GM12878 (cell line): ENCODE measurements at regions of chr12 and their contacts with region 1.

Region 1: GRCh38 chr12:63103494-63104131 is 47.4 kb downstream of the AVPR1A start:
- DNase-seq: no peak
- ATAC-seq: peak; percentile 35; the same call in 2 of the 3 replicates
- H3K4me3 ChIP-seq: no peak overlapping the region
- H3K27ac ChIP-seq: no peak overlapping the region
- H3K4me1 ChIP-seq: no peaks in the 10 kb centered on the region
- H3K27me3 ChIP-seq: no peaks in the 10 kb centered on the region
- CTCF ChIP-seq: peak; percentile 63 to 75 (median 70)
- EP300 ChIP-seq: no peak
- POLR2A ChIP-seq: no peak
- RAD21 ChIP-seq: peak; percentile 70

Region 2: DNA sequence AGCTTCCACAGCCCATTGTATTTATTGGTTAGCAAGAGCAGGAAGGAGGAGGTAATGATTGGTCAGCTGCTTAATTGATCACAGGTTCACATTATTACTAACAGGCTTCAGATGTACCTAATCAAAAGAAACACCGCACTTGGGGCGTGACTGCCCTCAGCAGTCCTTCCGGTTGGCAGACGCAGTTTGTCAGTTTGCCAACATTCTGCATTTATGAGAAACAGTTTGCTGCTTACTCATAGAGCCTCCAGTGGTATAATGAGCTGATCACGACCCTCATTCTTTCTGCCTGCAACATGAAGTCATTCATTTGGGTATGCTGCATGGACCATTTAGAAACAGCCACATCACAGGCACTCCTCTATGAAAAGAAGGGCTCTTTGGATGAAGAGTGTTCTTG is 126.2 kb before region 1 on chr12:
- CTCF ChIA-PET with region 1: no interaction called
- POLR2A ChIA-PET with region 1: no interaction called
- RAD21 ChIA-PET with region 1: no interaction called
- SMC1A ChIA-PET with region 1: no interaction called
- in situ Hi-C with region 1: no loop called
- intact Hi-C with region 1: no loop called
- DNase-seq: no peak
- ATAC-seq: no peak
- H3K4me3 ChIP-seq: no peak overlapping the region
- H3K27ac ChIP-seq: no peak overlapping the region
- H3K4me1 ChIP-seq: no peaks in the 10 kb centered on the region
- H3K27me3 ChIP-seq: no peaks in the 10 kb centered on the region
- CTCF ChIP-seq: no peak
- EP300 ChIP-seq: no peak
- POLR2A ChIP-seq: no peak
- RAD21 ChIP-seq: no peak

Region 3: DNA sequence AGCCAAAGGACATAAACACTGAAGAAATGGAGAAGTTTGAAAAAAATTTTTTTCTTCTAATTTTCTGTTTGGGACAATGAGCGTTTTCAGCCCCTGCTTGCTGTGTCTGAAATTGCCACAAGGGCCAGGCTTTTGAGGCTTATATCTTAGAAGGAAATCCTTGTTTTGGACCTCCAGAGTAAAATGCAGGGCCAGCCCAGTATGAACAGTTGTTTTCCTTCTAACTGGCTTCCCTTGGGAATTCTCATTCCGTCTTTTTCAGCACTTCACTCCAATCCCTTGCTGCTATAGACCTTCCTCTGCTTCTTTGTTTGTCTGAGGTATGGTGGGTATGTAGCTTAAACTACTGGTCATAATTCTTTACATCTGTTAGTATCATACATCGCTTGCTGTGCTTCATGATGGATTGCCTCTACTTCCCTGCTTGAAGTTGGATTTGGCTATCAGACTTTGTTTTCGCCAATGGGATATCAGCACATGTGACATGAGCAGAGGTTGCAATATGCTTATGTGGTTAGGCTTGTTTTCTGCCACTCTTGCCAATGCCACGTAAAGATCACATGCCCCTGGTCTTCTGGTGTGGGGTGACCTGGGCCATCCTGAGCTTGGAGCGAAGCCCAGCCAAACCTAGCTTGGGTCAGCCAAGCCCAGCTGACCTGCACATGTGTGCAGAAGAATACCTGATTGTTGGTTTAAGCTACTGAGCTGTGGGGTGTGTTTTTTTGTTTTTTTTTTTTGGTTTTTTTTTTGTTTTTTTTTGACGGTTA is 17.3 kb before region 1 on chr12:
- CTCF ChIA-PET with region 1: no interaction called
- POLR2A ChIA-PET with region 1: no interaction called
- RAD21 ChIA-PET with region 1: no interaction called
- SMC1A ChIA-PET with region 1: no interaction called
- in situ Hi-C with region 1: no loop called
- intact Hi-C with region 1: no loop called
- DNase-seq: no peak
- ATAC-seq: no peak
- H3K4me3 ChIP-seq: no peak overlapping the region
- H3K27ac ChIP-seq: no peak overlapping the region
- H3K4me1 ChIP-seq: no peaks in the 10 kb centered on the region
- H3K27me3 ChIP-seq: no peaks in the 10 kb centered on the region
- CTCF ChIP-seq: no peak
- EP300 ChIP-seq: no peak
- POLR2A ChIP-seq: no peak
- RAD21 ChIP-seq: no peak

Region 4: DNA sequence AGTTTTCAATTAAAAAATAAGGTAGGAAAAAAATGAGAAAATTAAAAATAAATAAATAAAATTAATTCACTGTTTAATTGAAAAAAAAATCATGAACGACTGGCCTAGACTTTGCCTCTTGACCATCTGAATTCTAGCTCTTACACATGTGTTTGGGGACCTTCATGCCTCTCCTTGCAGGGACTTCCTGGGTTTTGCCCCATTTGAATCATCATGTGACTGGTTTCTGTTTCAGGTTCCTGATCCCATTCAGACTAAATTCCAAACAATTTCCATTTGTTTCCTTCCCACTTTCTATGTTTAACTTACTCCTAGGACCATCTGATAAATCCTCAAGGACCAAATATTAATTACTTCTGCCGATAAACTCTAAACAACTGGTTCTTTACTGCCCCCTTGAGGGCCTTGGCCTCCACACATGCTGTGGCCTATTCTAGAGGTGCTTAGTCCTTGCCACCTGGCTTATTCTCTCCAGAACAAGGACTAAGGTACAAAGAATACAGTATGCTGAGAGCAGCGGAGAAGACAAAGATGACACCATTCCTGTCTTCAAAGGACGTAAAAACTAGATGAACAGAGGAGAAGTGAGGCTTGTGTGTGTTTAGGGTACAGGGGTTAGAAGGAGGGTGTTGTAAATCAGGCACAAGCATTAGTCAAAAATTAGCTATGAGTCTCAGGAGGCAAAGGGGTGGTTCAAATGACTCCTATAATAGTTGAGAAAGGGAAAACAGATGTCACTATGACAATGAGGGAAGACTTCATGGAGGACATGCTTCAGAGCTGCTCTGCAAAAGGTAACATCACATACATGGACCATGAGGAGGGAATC is 173.1 kb after region 1 on chr12:
- CTCF ChIA-PET with region 1: no interaction called
- POLR2A ChIA-PET with region 1: no interaction called
- RAD21 ChIA-PET with region 1: no interaction called
- SMC1A ChIA-PET with region 1: no interaction called
- in situ Hi-C with region 1: no loop called
- intact Hi-C with region 1: loop called (anchors 1 kb)
- DNase-seq: no peak
- ATAC-seq: peak; percentile 88
- H3K4me3 ChIP-seq: no peak overlapping the region
- H3K27ac ChIP-seq: no peak overlapping the region
- H3K4me1 ChIP-seq: no peaks in the 10 kb centered on the region
- H3K27me3 ChIP-seq: no peaks in the 10 kb centered on the region
- CTCF ChIP-seq: peak; percentile 22 to 61 (median 56)
- EP300 ChIP-seq: no peak
- POLR2A ChIP-seq: no peak
- RAD21 ChIP-seq: peak; percentile 40

Region 5: DNA sequence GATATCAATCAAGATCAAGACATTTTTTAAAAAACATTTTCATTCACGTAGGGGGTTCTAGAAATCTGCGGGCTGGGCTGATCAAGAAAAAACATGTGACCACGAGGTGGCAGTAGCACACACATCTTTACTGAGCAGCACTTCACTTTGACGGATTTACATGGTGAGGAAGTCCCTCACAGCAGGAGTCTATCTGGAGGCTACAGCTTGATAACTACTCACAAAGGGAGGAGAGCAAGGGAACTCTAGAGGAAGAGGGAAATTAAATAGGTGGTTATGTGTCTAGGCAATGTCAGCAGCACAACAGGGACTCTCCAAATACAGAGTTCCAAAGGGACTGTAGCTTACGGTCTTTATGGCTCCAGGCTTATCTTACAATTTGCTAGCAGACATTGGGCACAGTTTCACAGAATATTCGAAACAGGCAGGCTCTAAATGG is 316.6 kb after region 1 on chr12:
- CTCF ChIA-PET with region 1: no interaction called
- POLR2A ChIA-PET with region 1: no interaction called
- RAD21 ChIA-PET with region 1: no interaction called
- SMC1A ChIA-PET with region 1: no interaction called
- in situ Hi-C with region 1: no loop called
- intact Hi-C with region 1: loop called (anchors 2 kb)
- DNase-seq: peak; percentile 24
- ATAC-seq: peak; percentile 99
- H3K4me3 ChIP-seq: no peak overlapping the region
- H3K27ac ChIP-seq: no peak overlapping the region
- H3K4me1 ChIP-seq: no peaks in the 10 kb centered on the region
- H3K27me3 ChIP-seq: no peaks in the 10 kb centered on the region
- CTCF ChIP-seq: peak; percentile 57 to 75 (median 59); a peak in 5 of 6 replicates
- EP300 ChIP-seq: no peak
- POLR2A ChIP-seq: no peak
- RAD21 ChIP-seq: peak; percentile 66

Region 6: DNA sequence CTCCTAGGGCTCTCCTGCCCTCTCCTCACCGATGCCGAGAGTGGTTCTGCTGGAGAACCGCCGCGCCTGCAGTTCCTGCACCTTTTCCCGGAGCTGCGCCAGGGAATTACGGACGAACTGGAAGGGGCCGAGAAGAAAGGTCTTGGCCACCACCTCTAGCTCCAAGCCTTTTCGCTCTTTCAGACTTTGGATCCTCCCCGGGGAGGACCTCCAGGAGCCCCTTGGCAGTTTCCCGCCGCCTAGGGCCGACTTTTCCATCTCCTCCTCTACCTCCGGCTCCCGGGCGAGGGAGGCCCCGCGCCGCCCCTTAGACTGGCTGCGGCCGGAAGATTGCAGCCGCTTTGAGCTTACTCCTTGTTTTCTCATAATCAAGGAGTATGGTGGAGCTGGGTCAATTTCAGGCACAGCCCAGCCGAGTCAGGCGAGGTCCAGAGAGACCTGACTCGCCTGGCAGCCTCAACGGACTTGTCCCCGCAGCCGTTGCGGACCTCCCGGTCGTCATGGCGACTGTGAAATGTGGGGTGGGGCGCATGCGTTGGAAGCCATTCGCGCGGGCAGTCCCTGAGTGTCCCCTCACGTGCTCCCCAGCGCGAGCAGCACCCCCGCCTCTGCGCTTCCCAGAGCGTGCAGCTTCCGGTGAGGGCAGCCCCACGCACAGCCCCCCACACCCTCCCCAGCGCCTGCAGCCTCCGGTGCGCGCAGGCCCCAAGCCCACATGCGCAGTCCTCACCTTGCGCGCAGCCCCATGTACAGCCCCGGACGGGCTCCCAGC is 564.6 kb after region 1 on chr12 and contains the start of gene DPY19L2:
- CTCF ChIA-PET with region 1: no interaction called
- POLR2A ChIA-PET with region 1: no interaction called
- RAD21 ChIA-PET with region 1: no interaction called
- SMC1A ChIA-PET with region 1: no interaction called
- in situ Hi-C with region 1: no loop called
- intact Hi-C with region 1: loop called (anchors 10 kb)
- DNase-seq: no peak
- ATAC-seq: peak; percentile 89
- H3K4me3 ChIP-seq: peak within 1 kb of the TSS; percentile 55; the same call in 1 of the 2 replicates
- H3K27ac ChIP-seq: no peak within 1 kb of the TSS
- H3K4me1 ChIP-seq: no peaks in the 10 kb centered on the region
- H3K27me3 ChIP-seq: peaks cover 0 to 5% of the 10 kb centered on the region in 2 experiments; a peak in 2 of 4 replicates
- CTCF ChIP-seq: no peak
- EP300 ChIP-seq: no peak
- POLR2A ChIP-seq: no peak
- RAD21 ChIP-seq: no peak
- polyA plus RNA-seq, gene DPY19L2: not detected

Region 7: GRCh38 chr12:63802012-63802608 is 698.5 kb after region 1 on chr12:
- CTCF ChIA-PET with region 1: no interaction called
- POLR2A ChIA-PET with region 1: no interaction called
- RAD21 ChIA-PET with region 1: no interaction called
- SMC1A ChIA-PET with region 1: no interaction called
- in situ Hi-C with region 1: no loop called
- intact Hi-C with region 1: loop called (anchors 2 kb)
- DNase-seq: no peak
- ATAC-seq: peak; percentile 48
- H3K4me3 ChIP-seq: no peak overlapping the region
- H3K27ac ChIP-seq: no peak overlapping the region
- H3K4me1 ChIP-seq: no peaks in the 10 kb centered on the region
- H3K27me3 ChIP-seq: no peaks in the 10 kb centered on the region
- CTCF ChIP-seq: peak; percentile 37 to 65 (median 48); a peak in 5 of 6 replicates
- EP300 ChIP-seq: no peak
- POLR2A ChIP-seq: no peak
- RAD21 ChIP-seq: peak; percentile 69